ENCODE measurements at regions of chr6 and their contacts with region 1.

Region 1: GRCh38 chr6:170316071-170316470 is 9.5 kb downstream of the FAM120B start:
- DNase-seq: no peak
- ATAC-seq: no peak
- H3K4me3 ChIP-seq: no peak overlapping the region
- H3K4me3 Mint-ChIP-seq: no peak overlapping the region
- H3K27ac ChIP-seq: no peak overlapping the region
- H3K27ac Mint-ChIP-seq: peak overlapping the region in 1 of 9 donors; percentile 32
- H3K4me1 ChIP-seq: peaks cover 0 to 12% of the 10 kb centered on the region in 2 donors
- H3K4me1 Mint-ChIP-seq: peaks cover 25 to 84% (median 74%) of the 10 kb centered on the region in 7 donors
- H3K27me3 ChIP-seq: no peaks in the 10 kb centered on the region
- H3K27me3 Mint-ChIP-seq: no peaks in the 10 kb centered on the region

Region 2: GRCh38 chr6:170186006-170186958 is 129.8 kb before region 1 on chr6:
- CTCF ChIA-PET with region 1: no interaction called
- POLR2A ChIA-PET with region 1: no interaction called
- intact Hi-C with region 1: no loop called
- DNase-seq: no peak
- ATAC-seq: no peak
- H3K4me3 ChIP-seq: no peak overlapping the region
- H3K4me3 Mint-ChIP-seq: no peak overlapping the region
- H3K27ac ChIP-seq: no peak overlapping the region
- H3K27ac Mint-ChIP-seq: no peak overlapping the region
- H3K4me1 ChIP-seq: no peaks in the 10 kb centered on the region
- H3K4me1 Mint-ChIP-seq: peaks cover 0 to 19% (median 5%) of the 10 kb centered on the region in 7 donors
- H3K27me3 ChIP-seq: no peaks in the 10 kb centered on the region
- H3K27me3 Mint-ChIP-seq: peaks cover 0 to 3% (median 0%) of the 10 kb centered on the region in 5 donors

Region 3: DNA sequence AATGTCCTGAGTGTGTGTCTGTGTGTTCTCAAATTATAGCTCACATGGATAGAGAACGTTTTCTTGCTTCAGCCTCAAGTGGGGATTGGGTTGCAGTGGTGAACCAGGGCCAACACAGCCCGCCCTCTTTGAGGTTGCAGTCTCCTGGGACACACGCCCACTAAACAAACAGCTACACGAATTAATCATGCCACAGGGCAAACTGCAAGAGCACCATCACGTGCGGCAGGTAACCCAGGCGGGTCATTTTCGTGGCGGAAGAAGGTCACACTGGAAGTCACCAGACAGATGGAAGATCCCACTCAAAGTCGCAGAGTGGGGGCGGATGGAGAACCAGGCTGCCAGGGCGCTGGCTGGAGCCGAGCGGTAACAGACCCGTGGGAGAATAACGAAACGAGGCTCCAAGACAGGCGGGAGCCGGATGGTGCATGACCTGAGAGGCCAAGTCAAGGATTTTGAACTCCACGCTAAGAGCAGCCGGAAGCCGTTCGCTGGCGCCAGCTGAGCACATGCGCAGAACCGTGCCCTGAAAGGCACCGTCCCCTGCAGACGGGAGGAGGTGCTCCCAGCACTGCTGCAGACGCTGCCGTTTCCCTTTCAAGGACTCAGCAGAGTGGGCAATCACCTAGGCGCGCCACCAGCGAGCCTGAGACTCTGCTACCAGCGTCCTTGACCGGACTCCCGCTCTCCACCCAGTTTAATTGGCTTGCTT is 35.9 kb before region 1 on chr6:
- CTCF ChIA-PET with region 1: no interaction called
- POLR2A ChIA-PET with region 1: no interaction called
- intact Hi-C with region 1: no loop called
- DNase-seq: peak in 5 of 9 donors; percentile 58 to 75 (median 61)
- ATAC-seq: peak; percentile 58
- H3K4me3 ChIP-seq: peak overlapping the region; percentile 57
- H3K4me3 Mint-ChIP-seq: peak overlapping the region; percentile 57 to 86 (median 80)
- H3K27ac ChIP-seq: peak overlapping the region; percentile 56
- H3K27ac Mint-ChIP-seq: peak overlapping the region; percentile 14 to 96 (median 86)
- H3K4me1 ChIP-seq: peaks cover 5 to 31% of the 10 kb centered on the region in 2 donors
- H3K4me1 Mint-ChIP-seq: peaks cover 9 to 48% (median 27%) of the 10 kb centered on the region in 7 donors
- H3K27me3 ChIP-seq: no peaks in the 10 kb centered on the region
- H3K27me3 Mint-ChIP-seq: peaks cover 0 to 54% (median 1%) of the 10 kb centered on the region in 5 donors

Region 4: GRCh38 chr6:170371588-170371987 is 55.5 kb after region 1 on chr6:
- CTCF ChIA-PET with region 1: no interaction called
- POLR2A ChIA-PET with region 1: no interaction called
- intact Hi-C with region 1: loop called in 1 of 2 experiments (anchors 10 kb)
- DNase-seq: no peak
- ATAC-seq: no peak
- H3K4me3 ChIP-seq: no peak overlapping the region
- H3K4me3 Mint-ChIP-seq: no peak overlapping the region
- H3K27ac ChIP-seq: no peak overlapping the region
- H3K27ac Mint-ChIP-seq: peak overlapping the region in 5 of 9 donors; percentile 23 to 60 (median 45)
- H3K4me1 ChIP-seq: no peaks in the 10 kb centered on the region
- H3K4me1 Mint-ChIP-seq: peaks cover 8 to 20% (median 13%) of the 10 kb centered on the region in 7 donors
- H3K27me3 ChIP-seq: no peaks in the 10 kb centered on the region
- H3K27me3 Mint-ChIP-seq: no peaks in the 10 kb centered on the region